ENCODE measurements at regions of chr19 and their contacts with region 1.

Region 1: GRCh38 chr19:47296036-47296435 is 13.6 kb upstream of the C5AR1 start:
- DNase-seq: no peak
- H3K4me3 ChIP-seq: no peak overlapping the region
- H3K27me3 ChIP-seq: no peaks in the 10 kb centered on the region
- CTCF ChIP-seq: peak; percentile 75

Region 2: GRCh38 chr19:47284324-47284899 is 11.6 kb before region 1 on chr19:
- CTCF ChIA-PET with region 1: interaction called, 19 read pairs
- POLR2A ChIA-PET with region 1: no interaction called
- DNase-seq: no peak
- H3K4me3 ChIP-seq: no peak overlapping the region
- H3K27me3 ChIP-seq: no peaks in the 10 kb centered on the region
- CTCF ChIP-seq: peak; percentile 84

Region 3: GRCh38 chr19:47391510-47392223 is 95.6 kb after region 1 on chr19:
- CTCF ChIA-PET with region 1: interaction called, 93 read pairs
- POLR2A ChIA-PET with region 1: no interaction called
- DNase-seq: peak; percentile 4
- H3K4me3 ChIP-seq: no peak overlapping the region
- H3K27me3 ChIP-seq: peaks cover 2% of the 10 kb centered on the region; the same call in 1 of the 2 replicates
- CTCF ChIP-seq: peak; percentile 92

Region 4: DNA sequence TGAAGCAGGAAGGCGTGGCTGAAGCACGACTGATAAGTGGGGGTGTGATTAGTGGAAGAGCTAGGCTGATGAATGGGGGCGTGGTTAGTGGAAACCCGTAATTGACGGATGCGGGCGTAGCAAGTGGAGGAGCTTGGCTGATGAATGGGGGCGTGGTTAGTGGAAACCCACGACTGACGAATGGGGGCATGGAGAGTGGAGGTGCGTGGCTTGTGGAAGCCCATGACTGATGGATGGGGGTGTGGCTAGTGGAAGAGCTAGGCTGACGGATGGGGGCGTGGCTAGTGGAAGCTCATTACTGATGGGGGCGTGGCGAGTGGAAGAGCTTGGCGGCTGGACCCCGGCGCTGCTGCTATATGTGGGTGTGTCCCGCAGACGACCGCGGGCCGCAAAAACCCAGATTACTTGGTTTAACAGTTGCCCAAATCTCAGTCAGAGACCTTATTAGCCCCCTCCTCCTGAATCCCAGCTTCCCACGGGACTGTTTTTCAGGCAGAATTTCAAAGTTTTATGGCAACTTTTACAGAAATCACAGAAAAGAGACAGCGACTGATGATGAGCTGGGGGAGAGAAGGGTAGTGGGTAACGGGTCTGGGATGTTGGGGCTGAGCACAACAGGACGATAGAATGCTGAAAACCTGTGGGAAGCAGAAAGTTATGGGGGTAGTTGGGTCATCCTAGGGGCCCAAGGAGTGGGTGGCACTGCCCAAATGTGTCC is 132.3 kb after region 1 on chr19:
- CTCF ChIA-PET with region 1: interaction called, 46 read pairs
- POLR2A ChIA-PET with region 1: no interaction called
- DNase-seq: peak; percentile 97
- H3K4me3 ChIP-seq: peak overlapping the region; percentile 24; the same call in 1 of the 2 replicates
- H3K27me3 ChIP-seq: peaks cover 9% of the 10 kb centered on the region
- CTCF ChIP-seq: no peak

Region 5: GRCh38 chr19:47707135-47707925 is 411.3 kb after region 1 on chr19:
- CTCF ChIA-PET with region 1: interaction called, 11 read pairs
- POLR2A ChIA-PET with region 1: no interaction called
- DNase-seq: no peak
- H3K4me3 ChIP-seq: no peak overlapping the region
- H3K27me3 ChIP-seq: no peaks in the 10 kb centered on the region
- CTCF ChIP-seq: peak; percentile 93

Measured in BJ (cell line).